GM23248 (cell line): ENCODE measurements at regions of chr1 and their contacts with region 1.

Region 1: DNA sequence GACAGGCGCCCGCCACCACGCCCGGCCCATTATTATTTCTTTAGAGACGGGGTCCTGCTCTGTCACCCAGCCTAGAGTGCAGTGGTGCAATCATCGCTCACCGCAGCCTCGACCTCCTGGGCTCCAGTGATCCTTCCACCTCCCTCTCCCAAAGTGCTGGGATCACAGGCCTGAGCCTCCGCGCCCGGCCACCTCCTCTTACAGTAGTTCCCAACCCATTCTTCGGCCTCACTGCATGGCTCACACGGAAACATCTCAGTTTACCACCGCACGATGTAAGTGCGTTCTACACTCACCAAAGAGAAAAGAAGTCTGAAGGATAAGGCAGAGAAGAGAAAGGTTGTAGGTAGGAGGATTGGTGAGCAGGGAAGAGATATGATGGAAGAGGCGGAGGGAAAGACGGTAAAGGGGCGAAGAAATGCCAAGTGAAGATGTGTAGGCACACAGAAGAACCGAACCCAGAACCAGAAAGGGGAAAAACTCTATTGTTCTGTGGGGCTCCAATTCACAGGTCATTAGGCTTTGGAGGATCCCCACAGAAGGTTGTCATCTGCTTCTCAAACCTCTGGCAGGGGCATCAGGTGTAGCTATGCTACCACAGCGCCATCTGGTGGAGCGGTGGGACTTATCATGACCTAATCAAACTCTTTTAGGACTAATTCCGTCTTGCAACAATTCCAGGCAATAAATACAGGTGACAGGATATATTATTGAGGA is 504.2 kb downstream of the SMYD3 start:
- DNase-seq: peak; percentile 89
- H3K4me3 ChIP-seq: no peak overlapping the region
- H3K27ac ChIP-seq: no peak overlapping the region
- H3K4me1 ChIP-seq: peaks cover 23% of the 10 kb centered on the region
- H3K27me3 ChIP-seq: no peaks in the 10 kb centered on the region

Region 2: DNA sequence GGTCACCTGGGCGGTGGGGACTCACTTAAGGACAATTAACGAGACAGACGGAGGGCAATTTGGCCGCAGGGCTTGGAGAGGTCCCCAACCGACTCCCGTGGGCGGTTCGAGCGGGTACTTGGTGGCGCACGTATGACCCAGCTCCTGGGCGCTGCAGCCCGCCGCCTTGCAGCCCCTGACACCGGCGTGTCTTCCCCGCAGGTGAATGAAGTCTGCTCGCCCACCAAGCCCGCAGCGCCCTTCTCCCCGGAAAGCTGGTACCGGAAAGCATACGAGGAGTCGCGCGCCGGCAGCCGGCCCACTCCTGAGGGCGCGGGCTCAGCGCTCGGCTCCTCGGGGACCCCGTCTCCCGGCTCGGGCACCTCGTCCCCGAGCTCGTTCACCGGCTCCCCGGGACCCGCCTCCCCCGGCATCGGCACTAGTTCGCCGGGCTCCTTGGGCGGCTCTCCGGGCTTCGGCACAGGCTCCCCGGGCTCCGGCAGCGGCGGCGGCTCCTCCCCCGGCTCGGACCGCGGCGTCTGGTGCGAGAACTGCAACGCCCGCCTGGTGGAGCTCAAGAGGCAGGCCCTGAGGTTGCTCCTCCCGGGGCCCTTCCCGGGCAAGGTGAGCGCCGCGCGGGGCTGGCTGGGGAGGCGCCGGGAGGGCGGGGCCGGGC is 846.7 kb before region 1 on chr1:
- in situ Hi-C with region 1: loop called (anchors 5 kb)
- DNase-seq: peak; percentile 95
- H3K4me3 ChIP-seq: peak overlapping the region; percentile 81
- H3K27ac ChIP-seq: no peak overlapping the region
- H3K4me1 ChIP-seq: no peaks in the 10 kb centered on the region
- H3K27me3 ChIP-seq: no peaks in the 10 kb centered on the region

Region 3: DNA sequence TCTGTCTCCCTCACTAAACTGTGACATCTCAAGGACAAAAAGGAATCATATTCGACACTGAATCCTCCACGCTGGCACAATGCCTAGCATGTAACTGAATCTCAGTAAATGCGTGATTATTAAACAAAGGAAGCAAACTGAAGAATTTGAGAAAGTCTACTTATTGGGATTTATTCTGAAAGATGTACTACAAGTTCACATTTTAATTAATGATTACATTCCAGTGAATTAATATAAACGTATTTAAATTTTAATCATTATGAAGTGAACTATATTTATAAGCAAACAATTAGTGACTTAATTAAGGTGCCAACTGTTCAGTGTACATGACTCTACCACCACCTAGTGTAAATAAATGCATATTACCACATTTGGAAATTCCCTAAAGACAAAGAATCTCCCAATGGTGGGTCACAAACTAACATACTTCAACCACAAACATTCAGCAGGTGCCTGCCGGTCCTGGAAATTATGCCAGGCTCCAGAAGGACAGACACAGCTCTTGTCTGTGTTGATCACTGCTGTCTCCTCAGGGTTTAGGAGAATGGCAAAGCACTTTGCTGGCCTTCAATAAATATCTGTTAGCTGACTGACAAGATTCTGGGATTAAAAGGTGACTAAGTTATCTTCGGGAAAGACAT is 447.8 kb after region 1 on chr1:
- in situ Hi-C with region 1: loop called (anchors 25 kb)
- DNase-seq: peak; percentile 58
- H3K4me3 ChIP-seq: no peak overlapping the region
- H3K27ac ChIP-seq: no peak overlapping the region
- H3K4me1 ChIP-seq: peaks cover 20% of the 10 kb centered on the region
- H3K27me3 ChIP-seq: no peaks in the 10 kb centered on the region

Region 4: DNA sequence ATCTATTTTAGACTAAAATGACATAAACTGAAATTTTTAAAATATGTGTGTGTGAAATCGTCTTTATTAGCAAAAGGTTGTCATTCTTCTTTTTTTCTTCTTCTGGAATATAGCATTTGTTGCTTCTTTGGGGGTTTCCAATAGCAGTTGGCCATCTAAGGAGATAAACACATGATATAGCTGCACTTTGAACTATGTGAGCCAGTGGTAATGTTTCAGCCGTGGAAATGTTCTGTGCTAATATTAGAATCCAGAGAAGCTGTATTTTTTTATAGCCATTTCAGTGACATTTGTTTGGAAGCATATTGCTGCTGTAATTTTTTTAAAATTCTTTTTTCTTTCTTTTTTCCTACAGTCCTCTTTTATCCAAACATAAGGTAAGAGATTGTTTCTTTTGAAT is 638.5 kb after region 1 on chr1:
- in situ Hi-C with region 1: no loop called
- DNase-seq: no peak
- H3K4me3 ChIP-seq: no peak overlapping the region
- H3K27ac ChIP-seq: no peak overlapping the region
- H3K4me1 ChIP-seq: no peaks in the 10 kb centered on the region
- H3K27me3 ChIP-seq: no peaks in the 10 kb centered on the region